Activated naive CD4-positive, alpha-beta T cell treated with anti-CD3 and anti-CD28 coated beads for 36 hours (primary cell): ENCODE measurements at regions of chr1 and their contacts with region 1.

Region 1: DNA sequence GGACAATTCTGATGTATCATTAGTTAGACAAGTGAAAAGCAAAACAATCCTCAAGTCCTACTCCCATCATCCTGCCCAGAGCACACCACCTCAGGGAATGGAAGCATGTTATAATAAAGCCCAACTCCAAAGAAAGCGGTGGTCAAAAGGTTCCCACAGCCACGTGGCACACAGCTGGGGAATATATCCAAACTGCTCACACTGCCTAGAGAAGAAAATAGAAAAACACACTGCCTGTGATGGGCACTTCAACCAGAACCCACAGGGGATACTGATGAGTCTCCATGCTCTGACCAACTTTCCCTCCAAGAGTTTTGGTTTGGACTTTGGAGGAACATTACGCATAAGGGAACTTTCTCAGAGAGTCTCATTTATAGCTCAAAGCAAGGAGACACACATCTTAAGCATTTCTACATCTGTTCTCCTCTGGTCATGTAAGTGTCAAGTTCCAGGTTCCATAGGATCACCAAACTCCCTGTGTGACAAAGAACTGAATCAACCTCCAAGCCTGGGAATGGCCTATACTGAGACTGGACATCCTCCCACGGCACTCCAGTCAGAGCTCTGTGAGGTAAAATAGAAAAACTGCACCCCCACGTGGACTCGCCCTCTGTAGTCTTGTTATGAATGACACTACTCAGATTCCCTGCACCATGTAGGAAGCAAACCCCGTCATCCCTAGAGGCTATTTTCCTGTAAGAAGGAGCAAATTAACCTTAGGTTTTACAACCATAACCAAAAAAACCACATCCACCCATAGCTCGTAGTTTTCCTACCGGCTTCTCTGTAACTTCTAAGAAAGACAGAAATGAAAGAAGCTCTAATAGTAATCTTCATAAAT is 12.2 kb downstream of the DSTYK start:
- DNase-seq: peak; percentile 74
- H3K4me3 Mint-ChIP-seq: peak overlapping the region; percentile 66
- H3K27ac Mint-ChIP-seq: peak overlapping the region; percentile 97
- H3K4me1 Mint-ChIP-seq: peaks cover 78% of the 10 kb centered on the region
- H3K27me3 Mint-ChIP-seq: no peaks in the 10 kb centered on the region

Region 2: GRCh38 chr1:204565617-204566582 is 633.4 kb before region 1 on chr1:
- CTCF ChIA-PET with region 1: no interaction called
- intact Hi-C with region 1: loop called (anchors 10 kb)
- DNase-seq: peak; percentile 76
- H3K4me3 Mint-ChIP-seq: no peak overlapping the region
- H3K27ac Mint-ChIP-seq: no peak overlapping the region
- H3K4me1 Mint-ChIP-seq: peaks cover 45% of the 10 kb centered on the region
- H3K27me3 Mint-ChIP-seq: no peaks in the 10 kb centered on the region

Region 3: GRCh38 chr1:205172729-205173366 is 26.5 kb before region 1 on chr1:
- CTCF ChIA-PET with region 1: interaction called, 3 read pairs
- intact Hi-C with region 1: loop called (anchors 1 kb)
- DNase-seq: no peak
- H3K4me3 Mint-ChIP-seq: no peak overlapping the region
- H3K27ac Mint-ChIP-seq: peak overlapping the region; percentile 74
- H3K4me1 Mint-ChIP-seq: peaks cover 31% of the 10 kb centered on the region
- H3K27me3 Mint-ChIP-seq: no peaks in the 10 kb centered on the region

Region 4: DNA sequence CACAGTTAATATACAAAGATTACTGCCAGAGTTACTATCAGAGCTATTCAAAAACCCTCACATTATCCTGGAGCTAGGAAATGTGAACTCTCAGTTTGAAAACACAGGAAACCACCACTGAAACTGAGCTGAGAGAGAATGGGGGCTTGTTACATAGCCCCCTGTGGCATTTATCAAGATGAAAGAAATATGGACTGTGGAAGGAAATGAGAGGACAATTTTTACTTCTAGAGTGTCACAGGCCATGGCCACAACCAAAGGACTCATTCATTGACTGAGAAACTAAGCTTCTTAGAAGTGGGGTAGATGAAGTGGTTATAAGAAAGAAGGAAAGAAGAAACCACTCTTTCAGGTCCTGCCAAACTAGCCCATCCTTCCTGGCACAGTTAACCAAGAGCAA is 13.1 kb before region 1 on chr1:
- CTCF ChIA-PET with region 1: interaction called, 4 read pairs
- intact Hi-C with region 1: loop called (anchors 1 kb)
- DNase-seq: peak; percentile 39
- H3K4me3 Mint-ChIP-seq: no peak overlapping the region
- H3K27ac Mint-ChIP-seq: peak overlapping the region; percentile 48
- H3K4me1 Mint-ChIP-seq: peaks cover 70% of the 10 kb centered on the region
- H3K27me3 Mint-ChIP-seq: no peaks in the 10 kb centered on the region

Region 5: DNA sequence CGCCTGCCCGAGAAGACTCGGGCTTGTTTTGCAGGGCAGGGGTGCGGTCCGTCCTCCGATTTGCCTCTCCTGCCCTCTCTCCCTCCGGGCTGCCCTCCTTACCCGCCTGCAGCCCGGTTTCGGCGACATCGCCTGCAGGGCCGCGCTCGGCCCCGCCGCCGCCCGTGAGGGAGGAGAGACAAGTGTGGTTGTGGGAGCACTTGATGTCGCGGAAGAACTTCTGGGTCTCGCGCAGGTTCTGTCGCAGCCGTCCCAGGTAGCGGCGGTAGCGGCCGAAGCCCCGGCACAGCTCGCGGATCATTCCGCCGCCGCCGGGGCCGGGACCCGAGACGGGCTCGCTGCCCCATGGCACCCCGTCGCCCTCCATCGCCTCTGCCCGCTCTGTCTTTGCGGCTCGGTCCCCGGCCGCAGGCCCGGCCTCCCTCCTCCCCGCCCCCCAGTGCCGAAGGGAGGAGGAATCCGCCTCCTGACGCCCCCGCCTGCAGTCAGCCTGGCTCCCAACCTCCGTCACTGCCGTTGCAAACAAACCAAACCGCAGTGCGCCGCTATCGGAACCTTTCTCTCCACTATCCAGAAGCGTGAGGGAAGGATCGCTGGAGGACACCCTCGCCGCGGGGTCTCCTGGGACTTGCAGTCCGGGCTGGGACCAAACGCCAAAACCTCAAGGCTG is 12.0 kb after region 1 on chr1 and contains the start of gene DSTYK:
- CTCF ChIA-PET with region 1: interaction called, 4 read pairs
- intact Hi-C with region 1: loop called (anchors 1 kb)
- DNase-seq: peak; percentile 97
- H3K4me3 Mint-ChIP-seq: peak within 1 kb of the TSS; percentile 93
- H3K27ac Mint-ChIP-seq: peak within 1 kb of the TSS; percentile 95
- H3K4me1 Mint-ChIP-seq: peaks cover 57% of the 10 kb centered on the region
- H3K27me3 Mint-ChIP-seq: no peaks in the 10 kb centered on the region
- total RNA-seq, gene DSTYK: 10.9 to 11.5 TPM

Region 6: DNA sequence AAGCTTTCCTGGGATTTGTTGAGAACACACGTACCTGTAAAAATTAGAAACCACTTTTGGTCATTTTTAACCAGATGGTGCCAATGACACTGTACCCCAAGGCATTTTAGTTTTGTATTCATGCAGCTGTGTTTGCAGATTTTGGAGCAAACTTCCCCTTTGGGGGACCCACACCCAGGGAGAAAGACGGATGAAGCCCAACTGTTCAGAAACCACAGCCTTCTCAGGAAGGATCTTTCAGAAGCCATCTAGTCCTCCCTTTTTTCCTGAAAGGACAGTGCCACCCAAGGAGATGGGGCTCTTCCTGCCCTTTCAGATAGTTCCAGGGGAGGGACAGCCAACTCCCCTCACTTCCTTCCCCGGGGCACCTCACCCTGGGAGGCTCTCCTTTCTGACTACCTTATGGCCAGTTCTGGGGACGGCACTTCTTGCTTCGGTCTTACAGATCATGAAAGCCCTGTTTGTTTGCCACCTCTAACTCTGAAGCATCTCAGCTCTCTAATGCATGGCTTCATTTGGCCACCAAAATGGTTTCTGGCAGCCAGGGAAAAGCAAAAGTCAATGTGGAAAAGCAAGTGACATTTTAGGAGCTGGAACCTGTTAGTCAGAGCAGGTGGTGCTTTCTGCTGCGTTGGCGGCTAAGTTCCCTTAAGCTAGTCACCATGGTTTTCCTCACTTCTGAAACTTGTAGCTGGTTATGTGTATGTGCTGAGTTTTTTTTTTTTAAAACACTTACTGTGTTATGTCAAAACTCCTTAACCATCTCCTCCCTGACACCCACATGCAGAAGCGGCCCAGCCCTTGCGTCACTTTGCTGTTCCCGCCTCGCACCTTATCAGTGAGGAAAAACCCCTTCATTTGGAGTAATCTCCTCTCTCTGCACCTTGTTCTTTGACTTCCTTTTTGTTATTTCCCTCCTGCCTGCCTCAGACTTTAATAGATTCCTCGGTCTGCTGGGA is 38.5 kb after region 1 on chr1:
- CTCF ChIA-PET with region 1: interaction called, 6 read pairs
- intact Hi-C with region 1: loop called (anchors 1 kb)
- DNase-seq: peak; percentile 92
- H3K4me3 Mint-ChIP-seq: peak overlapping the region; percentile 44
- H3K27ac Mint-ChIP-seq: peak overlapping the region; percentile 98
- H3K4me1 Mint-ChIP-seq: peaks cover 77% of the 10 kb centered on the region
- H3K27me3 Mint-ChIP-seq: no peaks in the 10 kb centered on the region

Region 7: GRCh38 chr1:205284343-205285144 is 85.2 kb after region 1 on chr1:
- CTCF ChIA-PET with region 1: interaction called, 3 read pairs
- intact Hi-C with region 1: loop called (anchors 1 kb)
- DNase-seq: peak; percentile 97
- H3K4me3 Mint-ChIP-seq: peak overlapping the region; percentile 29
- H3K27ac Mint-ChIP-seq: peak overlapping the region; percentile 87
- H3K4me1 Mint-ChIP-seq: peaks cover 77% of the 10 kb centered on the region
- H3K27me3 Mint-ChIP-seq: no peaks in the 10 kb centered on the region